ENCODE measurements at regions of chr5 and their contacts with region 1.

Region 1: DNA sequence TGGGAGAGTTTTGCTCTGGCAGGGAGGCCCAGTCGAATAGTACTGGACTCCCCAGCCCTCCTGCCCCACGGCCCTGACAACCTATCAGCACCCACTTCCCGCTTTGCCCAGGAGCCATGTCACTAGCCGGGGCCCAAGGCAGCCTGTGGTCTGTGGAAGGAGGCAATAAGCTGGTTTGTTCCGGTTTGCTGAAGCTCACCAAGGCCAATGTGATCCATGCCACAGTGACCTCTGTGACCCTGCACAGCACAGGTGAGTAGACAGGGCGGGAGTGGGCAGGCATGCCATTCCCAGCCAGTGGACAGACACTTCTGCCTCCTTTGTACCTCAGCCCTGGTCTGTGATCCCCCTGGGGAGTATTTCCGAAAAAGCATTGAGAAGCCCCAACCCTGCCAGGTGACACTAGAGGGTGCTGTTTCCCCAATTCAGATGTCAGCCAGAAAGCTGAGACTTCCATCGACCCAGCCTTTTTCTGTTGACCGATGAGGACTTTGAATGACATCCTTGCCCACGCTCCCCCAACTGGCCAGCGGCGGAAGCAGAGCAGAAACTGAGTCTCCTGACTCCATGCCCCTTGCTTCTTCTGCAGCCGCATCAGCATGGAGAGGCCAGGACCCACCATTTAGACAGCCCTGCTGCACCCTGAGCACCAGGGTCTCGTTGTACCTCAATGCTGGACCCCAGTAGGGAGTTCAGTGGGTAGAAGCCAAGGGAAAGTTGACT is 9.6 kb downstream of the PCYOX1L start:
- DNase-seq: peak; percentile 69
- H3K4me3 Mint-ChIP-seq: no peak overlapping the region
- H3K27ac Mint-ChIP-seq: peak overlapping the region; percentile 60
- H3K4me1 Mint-ChIP-seq: peaks cover 6% of the 10 kb centered on the region
- H3K27me3 Mint-ChIP-seq: no peaks in the 10 kb centered on the region

Region 2: DNA sequence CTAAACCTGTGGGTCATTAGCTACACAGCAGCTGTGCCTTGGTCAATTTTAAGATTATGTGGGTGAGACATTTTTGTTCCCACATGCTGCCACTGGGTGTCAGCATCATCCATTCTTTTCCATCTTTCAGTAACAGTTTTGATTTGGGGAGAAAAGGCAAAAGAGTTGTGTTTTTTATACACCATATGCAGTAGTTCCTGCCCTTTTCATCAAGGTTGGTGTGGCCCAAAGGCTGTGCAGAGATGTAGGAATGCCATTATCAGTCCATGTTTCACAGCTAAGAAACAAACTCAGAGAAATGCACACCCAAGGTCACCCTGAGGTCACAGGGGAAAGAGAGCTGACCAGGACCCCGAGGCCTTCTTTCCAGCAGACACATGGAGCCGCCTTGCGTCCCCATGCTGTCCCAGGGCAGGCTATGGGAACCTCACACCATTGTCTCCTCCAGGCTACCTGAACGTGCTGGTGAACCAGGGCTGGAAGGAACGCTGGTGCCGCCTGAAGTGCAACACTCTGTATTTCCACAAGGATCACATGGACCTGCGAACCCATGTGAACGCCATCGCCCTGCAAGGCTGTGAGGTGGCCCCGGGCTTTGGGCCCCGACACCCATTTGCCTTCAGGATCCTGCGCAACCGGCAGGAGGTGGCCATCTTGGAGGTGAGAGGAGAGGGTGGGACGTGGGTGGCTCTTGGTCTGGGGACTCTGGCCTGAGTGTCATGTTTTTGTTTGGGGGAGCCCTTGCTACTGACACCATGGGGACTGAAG is 49.9 kb before region 1 on chr5:
- CTCF ChIA-PET with region 1: interaction called, 372 read pairs
- DNase-seq: peak; percentile 58
- H3K4me3 Mint-ChIP-seq: no peak overlapping the region
- H3K27ac Mint-ChIP-seq: no peak overlapping the region
- H3K4me1 Mint-ChIP-seq: no peaks in the 10 kb centered on the region
- H3K27me3 Mint-ChIP-seq: peaks cover 13% of the 10 kb centered on the region

Region 3: DNA sequence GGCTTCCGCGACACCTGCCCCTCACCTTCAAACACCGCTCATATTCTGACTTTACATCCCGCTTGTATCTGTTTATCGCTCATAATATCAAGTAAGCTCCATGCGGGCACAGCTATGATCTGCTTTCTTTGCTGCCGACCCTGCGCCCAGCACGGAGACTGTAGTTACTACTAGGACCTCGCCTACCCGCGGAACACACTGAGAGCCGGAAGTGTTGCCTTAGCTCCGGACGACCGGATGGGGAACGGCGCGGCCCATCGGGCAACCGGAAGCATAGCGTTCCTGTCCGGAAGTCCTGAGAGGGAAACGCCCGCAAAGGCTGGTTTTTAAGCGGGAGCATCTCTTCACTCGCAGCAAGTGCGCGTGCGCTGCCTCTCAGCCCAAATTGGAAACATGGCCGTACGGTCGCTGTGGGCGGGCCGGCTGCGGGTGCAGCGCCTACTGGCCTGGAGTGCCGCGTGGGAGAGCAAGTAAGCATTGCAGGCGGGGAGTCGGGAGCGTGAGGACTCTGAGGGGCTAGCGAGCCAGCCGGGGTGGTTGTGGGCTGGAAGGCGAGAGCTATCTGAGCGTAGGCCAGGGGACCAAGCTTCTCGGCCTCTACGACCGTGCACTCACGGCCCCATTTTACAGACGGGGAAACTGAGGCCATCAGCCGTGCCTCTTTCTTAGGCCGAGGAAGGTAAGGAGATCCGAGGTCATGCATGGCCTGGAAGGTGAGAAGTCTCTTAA is 22.1 kb before region 1 on chr5 and contains the start of gene GRPEL2:
- CTCF ChIA-PET with region 1: interaction called, 21 read pairs
- DNase-seq: peak; percentile 94
- H3K4me3 Mint-ChIP-seq: peak within 1 kb of the TSS; percentile 80
- H3K27ac Mint-ChIP-seq: peak within 1 kb of the TSS; percentile 86
- H3K4me1 Mint-ChIP-seq: peaks cover 56% of the 10 kb centered on the region
- H3K27me3 Mint-ChIP-seq: no peaks in the 10 kb centered on the region

Region 4: GRCh38 chr5:149381987-149382340 is 14.6 kb after region 1 on chr5:
- CTCF ChIA-PET with region 1: interaction called, 23 read pairs
- DNase-seq: peak; percentile 83
- H3K4me3 Mint-ChIP-seq: no peak overlapping the region
- H3K27ac Mint-ChIP-seq: no peak overlapping the region
- H3K4me1 Mint-ChIP-seq: no peaks in the 10 kb centered on the region
- H3K27me3 Mint-ChIP-seq: peaks cover 11% of the 10 kb centered on the region

Region 5: GRCh38 chr5:149387081-149387631 is 19.7 kb after region 1 on chr5:
- CTCF ChIA-PET with region 1: interaction called, 23 read pairs
- DNase-seq: no peak
- H3K4me3 Mint-ChIP-seq: no peak overlapping the region
- H3K27ac Mint-ChIP-seq: no peak overlapping the region
- H3K4me1 Mint-ChIP-seq: no peaks in the 10 kb centered on the region
- H3K27me3 Mint-ChIP-seq: peaks cover 8% of the 10 kb centered on the region